Naive thymus-derived CD4-positive, alpha-beta T cell (primary cell): ENCODE measurements at regions of chr1 and their contacts with region 1.

Region 1: GRCh38 chr1:92784639-92785500 is at the start of gene EVI5:
- DNase-seq: peak; percentile 26 to 72 (median 59)
- ATAC-seq: peak; percentile 91
- H3K4me3 ChIP-seq: peak within 1 kb of the TSS; percentile 62
- H3K4me3 Mint-ChIP-seq: peak within 1 kb of the TSS; percentile 67 to 91 (median 85)
- H3K27ac ChIP-seq: peak within 1 kb of the TSS; percentile 26
- H3K27ac Mint-ChIP-seq: peak within 1 kb of the TSS in 6 of 9 donors; percentile 20 to 72 (median 46)
- H3K4me1 ChIP-seq: peaks cover 8 to 10% of the 10 kb centered on the region in 2 donors
- H3K4me1 Mint-ChIP-seq: peaks cover 7 to 25% (median 19%) of the 10 kb centered on the region in 7 donors
- H3K27me3 ChIP-seq: peaks cover 3 to 7% of the 10 kb centered on the region in 2 donors
- H3K27me3 Mint-ChIP-seq: peaks cover 10 to 81% (median 32%) of the 10 kb centered on the region in 5 donors
- total RNA-seq, gene EVI5: 0.97 to 12.3 (median 2.2) TPM

Region 2: GRCh38 chr1:92583821-92584760 is 200.8 kb before region 1 on chr1:
- CTCF ChIA-PET with region 1: no interaction called
- POLR2A ChIA-PET with region 1: no interaction called
- intact Hi-C with region 1: no loop called
- DNase-seq: peak in 7 of 9 donors; percentile 50 to 82 (median 76)
- ATAC-seq: peak; percentile 93
- H3K4me3 ChIP-seq: peak overlapping the region; percentile 30
- H3K4me3 Mint-ChIP-seq: peak overlapping the region; percentile 25 to 88 (median 68)
- H3K27ac ChIP-seq: peak overlapping the region; percentile 47
- H3K27ac Mint-ChIP-seq: peak overlapping the region; percentile 41 to 93 (median 86)
- H3K4me1 ChIP-seq: peaks cover 27 to 38% of the 10 kb centered on the region in 2 donors
- H3K4me1 Mint-ChIP-seq: peaks cover 22 to 66% (median 63%) of the 10 kb centered on the region in 7 donors
- H3K27me3 ChIP-seq: no peaks in the 10 kb centered on the region
- H3K27me3 Mint-ChIP-seq: no peaks in the 10 kb centered on the region

Region 3: GRCh38 chr1:92817986-92818764 is 33.3 kb after region 1 on chr1:
- CTCF ChIA-PET with region 1: no interaction called
- POLR2A ChIA-PET with region 1: no interaction called
- intact Hi-C with region 1: loop called in 1 of 2 experiments (anchors 1 kb)
- DNase-seq: peak in 4 of 9 donors; percentile 20 to 28 (median 28)
- ATAC-seq: peak; percentile 71
- H3K4me3 ChIP-seq: no peak overlapping the region
- H3K4me3 Mint-ChIP-seq: no peak overlapping the region
- H3K27ac ChIP-seq: no peak overlapping the region
- H3K27ac Mint-ChIP-seq: peak overlapping the region in 1 of 9 donors; percentile 31
- H3K4me1 ChIP-seq: no peaks in the 10 kb centered on the region
- H3K4me1 Mint-ChIP-seq: no peaks in the 10 kb centered on the region
- H3K27me3 ChIP-seq: no peaks in the 10 kb centered on the region
- H3K27me3 Mint-ChIP-seq: peaks cover 0 to 39% (median 9%) of the 10 kb centered on the region in 5 donors

Region 4: DNA sequence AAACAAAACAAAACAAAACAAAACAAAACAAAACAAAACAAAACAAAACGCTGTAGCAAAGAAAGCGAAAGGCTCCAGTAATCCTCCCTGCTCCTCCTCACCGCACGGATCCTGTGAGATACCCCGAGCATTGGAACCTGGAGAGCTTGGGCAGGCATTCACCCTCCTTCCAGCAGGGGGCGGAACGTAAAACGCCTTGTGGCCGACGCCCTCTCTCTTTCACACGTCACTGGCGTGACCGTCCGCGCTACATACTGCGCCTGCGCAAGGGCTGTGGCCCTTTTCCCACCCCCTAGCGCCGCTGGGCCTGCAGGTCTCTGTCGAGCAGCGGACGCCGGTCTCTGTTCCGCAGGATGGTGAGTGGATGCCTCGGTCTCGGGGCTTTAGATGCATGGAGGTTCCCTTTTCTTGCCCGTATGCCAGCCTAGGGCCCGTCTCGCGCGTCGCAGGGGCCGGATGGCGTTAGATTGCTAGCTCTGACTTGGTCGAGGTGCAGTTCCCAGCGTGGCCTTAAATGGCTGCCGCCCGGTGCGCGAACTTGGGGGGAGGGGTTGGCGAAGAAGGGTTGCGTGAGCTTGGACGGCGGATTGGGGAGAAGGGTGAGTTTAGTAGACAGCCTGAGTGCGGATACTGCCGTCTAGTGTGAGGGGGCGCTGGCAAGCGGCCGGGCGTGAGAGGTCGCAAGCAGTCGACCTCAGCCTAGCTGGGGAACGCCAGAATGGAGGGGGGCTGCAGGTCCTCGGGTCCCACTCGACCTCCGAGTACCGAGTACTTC is 47.1 kb after region 1 on chr1 and contains the start of gene RPL5:
- CTCF ChIA-PET with region 1: no interaction called
- POLR2A ChIA-PET with region 1: interaction called, 8 read pairs
- intact Hi-C with region 1: loop called (anchors 1 to 5 kb)
- DNase-seq: peak; percentile 94 to 99 (median 98)
- ATAC-seq: peak; percentile 95
- H3K4me3 ChIP-seq: peak within 1 kb of the TSS; percentile 94
- H3K4me3 Mint-ChIP-seq: peak within 1 kb of the TSS; percentile 94 to 100 (median 98)
- H3K27ac ChIP-seq: peak within 1 kb of the TSS; percentile 94
- H3K27ac Mint-ChIP-seq: peak within 1 kb of the TSS; percentile 98 to 100 (median 99)
- H3K4me1 ChIP-seq: peaks cover 16 to 30% of the 10 kb centered on the region in 2 donors
- H3K4me1 Mint-ChIP-seq: peaks cover 29 to 54% (median 44%) of the 10 kb centered on the region in 7 donors
- H3K27me3 ChIP-seq: no peaks in the 10 kb centered on the region
- H3K27me3 Mint-ChIP-seq: peaks cover 0 to 5% (median 0%) of the 10 kb centered on the region in 5 donors
- total RNA-seq, gene RPL5: 764 to 1,693 (median 1,596) TPM